AG04449 (cell line): ENCODE measurements at regions of chr12 and their contacts with region 1.

Region 1: GRCh38 chr12:22684140-22685118 is 59.5 kb downstream of the ETNK1 start:
- DNase-seq: no peak
- H3K4me3 ChIP-seq: no peak overlapping the region
- CTCF ChIP-seq: peak; percentile 24

Region 2: DNA sequence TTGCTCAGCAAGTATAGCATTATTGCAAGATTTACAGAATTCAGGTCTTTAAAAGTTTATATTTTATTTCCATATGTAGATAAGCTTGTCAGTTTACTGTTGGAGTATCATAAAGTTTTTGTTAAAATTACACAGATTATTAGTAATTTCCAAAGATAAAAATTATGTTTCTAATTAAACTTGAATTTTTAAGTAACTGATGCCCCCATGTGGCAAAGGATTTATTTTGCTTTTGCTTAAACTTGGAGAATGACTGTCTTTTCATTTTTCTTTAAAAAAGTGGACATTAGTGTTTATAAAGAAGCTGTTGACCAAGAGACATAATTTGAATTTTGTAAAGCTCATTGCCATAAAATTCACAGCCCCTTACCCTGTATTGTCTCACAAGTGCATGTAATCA is 13.7 kb before region 1 on chr12:
- CTCF ChIA-PET with region 1: interaction called, 23 read pairs
- POLR2A ChIA-PET with region 1: no interaction called
- DNase-seq: no peak
- H3K4me3 ChIP-seq: no peak overlapping the region
- CTCF ChIP-seq: no peak